ENCODE measurements at regions of chr4 and their contacts with region 1.

Region 1: GRCh38 chr4:10554694-10555093 is 97.5 kb upstream of the ZNF518B start:
- DNase-seq: peak in 8 of 9 experiments; percentile 7 to 59 (median 32)
- ATAC-seq: peak; percentile 51
- H3K4me3 ChIP-seq: no peak overlapping the region
- H3K4me3 Mint-ChIP-seq: no peak overlapping the region
- H3K27ac ChIP-seq: no peak overlapping the region
- H3K27ac Mint-ChIP-seq: no peak overlapping the region
- H3K4me1 ChIP-seq: no peaks in the 10 kb centered on the region
- H3K4me1 Mint-ChIP-seq: peaks cover 2% of the 10 kb centered on the region
- H3K27me3 ChIP-seq: no peaks in the 10 kb centered on the region
- H3K27me3 Mint-ChIP-seq: peaks cover 14% of the 10 kb centered on the region
- CTCF ChIP-seq: peak; percentile 92

Region 2: DNA sequence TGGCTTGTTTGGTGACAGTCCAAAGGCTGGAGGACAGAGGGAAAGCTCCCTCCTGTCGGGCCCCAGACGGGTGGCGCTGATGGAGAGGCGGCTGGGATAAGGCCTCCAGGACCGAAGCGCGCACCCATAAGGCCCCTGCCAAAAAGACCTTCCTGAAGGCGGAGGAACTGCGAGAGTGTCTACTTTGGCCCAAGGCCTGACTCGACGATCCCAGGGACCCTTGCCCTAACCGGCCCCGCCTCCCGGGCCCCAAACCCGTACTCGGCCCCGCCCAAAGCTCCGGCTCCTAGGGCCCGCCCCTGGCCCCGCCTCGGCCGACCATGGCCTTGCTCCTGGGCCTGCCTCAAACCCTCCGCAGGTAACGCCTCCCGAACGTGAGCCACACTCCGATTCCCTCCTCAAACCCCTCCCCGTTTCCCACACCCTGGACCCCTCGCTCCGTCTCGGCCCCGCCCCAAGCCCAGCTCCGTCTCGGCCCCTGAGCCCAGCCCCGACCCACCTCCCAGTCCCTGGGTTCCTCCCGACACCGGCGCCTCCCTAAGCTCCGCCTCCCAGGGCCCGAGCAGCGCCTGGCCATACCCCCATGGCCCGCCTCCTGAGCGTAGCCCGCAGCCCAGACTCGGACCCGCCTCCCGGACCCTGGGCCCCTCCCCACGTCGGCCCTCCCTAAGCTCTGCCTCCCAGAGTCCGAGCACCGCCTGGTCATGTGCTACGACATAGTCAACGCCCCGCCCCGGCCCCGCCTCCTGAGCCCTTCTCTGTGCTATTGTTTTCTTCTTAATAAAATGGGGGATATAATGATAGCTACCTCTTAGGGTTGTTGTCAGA is 863.2 kb before region 1 on chr4:
- CTCF ChIA-PET with region 1: no interaction called
- POLR2A ChIA-PET with region 1: no interaction called
- intact Hi-C with region 1: loop called in 1 of 2 experiments (anchors 5 kb)
- DNase-seq: peak; percentile 79 to 96 (median 89)
- ATAC-seq: peak; percentile 99
- H3K4me3 ChIP-seq: peak overlapping the region; percentile 72 to 75
- H3K4me3 Mint-ChIP-seq: peak overlapping the region; percentile 88
- H3K27ac ChIP-seq: peak overlapping the region; percentile 55 to 76
- H3K27ac Mint-ChIP-seq: peak overlapping the region; percentile 76
- H3K4me1 ChIP-seq: peaks cover 8% of the 10 kb centered on the region
- H3K4me1 Mint-ChIP-seq: peaks cover 28% of the 10 kb centered on the region
- H3K27me3 ChIP-seq: no peaks in the 10 kb centered on the region
- H3K27me3 Mint-ChIP-seq: no peaks in the 10 kb centered on the region
- CTCF ChIP-seq: no peak

Region 3: GRCh38 chr4:9762823-9763475 is 791.7 kb before region 1 on chr4:
- CTCF ChIA-PET with region 1: no interaction called
- POLR2A ChIA-PET with region 1: no interaction called
- intact Hi-C with region 1: loop called in 1 of 2 experiments (anchors 5 kb)
- DNase-seq: peak in 4 of 9 experiments; percentile 12 to 54 (median 32)
- ATAC-seq: no peak
- H3K4me3 ChIP-seq: no peak overlapping the region
- H3K4me3 Mint-ChIP-seq: no peak overlapping the region
- H3K27ac ChIP-seq: no peak overlapping the region
- H3K27ac Mint-ChIP-seq: no peak overlapping the region
- H3K4me1 ChIP-seq: no peaks in the 10 kb centered on the region
- H3K4me1 Mint-ChIP-seq: no peaks in the 10 kb centered on the region
- H3K27me3 ChIP-seq: no peaks in the 10 kb centered on the region
- H3K27me3 Mint-ChIP-seq: peaks cover 8% of the 10 kb centered on the region
- CTCF ChIP-seq: no peak

Region 4: GRCh38 chr4:10157478-10158332 is 397.0 kb before region 1 on chr4:
- CTCF ChIA-PET with region 1: interaction called, 41 read pairs
- POLR2A ChIA-PET with region 1: no interaction called
- intact Hi-C with region 1: no loop called
- DNase-seq: peak in 7 of 9 experiments; percentile 14 to 65 (median 27)
- ATAC-seq: peak; percentile 48
- H3K4me3 ChIP-seq: no peak overlapping the region
- H3K4me3 Mint-ChIP-seq: no peak overlapping the region
- H3K27ac ChIP-seq: no peak overlapping the region
- H3K27ac Mint-ChIP-seq: peak overlapping the region; percentile 55
- H3K4me1 ChIP-seq: peaks cover 43% of the 10 kb centered on the region
- H3K4me1 Mint-ChIP-seq: peaks cover 43% of the 10 kb centered on the region
- H3K27me3 ChIP-seq: no peaks in the 10 kb centered on the region
- H3K27me3 Mint-ChIP-seq: no peaks in the 10 kb centered on the region
- CTCF ChIP-seq: peak; percentile 54

Region 5: DNA sequence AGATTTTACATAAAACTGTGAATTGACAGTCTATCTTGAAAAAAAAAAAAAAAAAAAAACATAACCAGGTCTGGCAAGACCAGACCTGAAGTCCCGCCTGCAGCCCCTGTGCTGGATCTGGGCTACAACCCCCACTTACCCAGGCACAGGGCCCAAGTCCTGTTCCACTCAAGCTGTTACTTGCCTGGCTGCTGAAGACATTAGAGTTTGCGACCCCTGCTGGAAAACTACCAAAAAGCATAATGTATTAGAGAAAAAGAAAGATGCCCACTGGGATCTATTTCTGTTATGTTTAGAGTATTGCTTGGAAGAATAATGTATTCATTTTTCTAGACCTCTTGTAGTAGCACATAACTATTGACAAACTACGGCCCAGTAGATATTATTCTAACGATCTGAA is 869.3 kb after region 1 on chr4:
- CTCF ChIA-PET with region 1: interaction called, 5 read pairs
- POLR2A ChIA-PET with region 1: no interaction called
- intact Hi-C with region 1: loop called (anchors 2 kb)
- DNase-seq: peak in 4 of 9 experiments; percentile 15 to 51 (median 36)
- ATAC-seq: no peak
- H3K4me3 ChIP-seq: no peak overlapping the region
- H3K4me3 Mint-ChIP-seq: no peak overlapping the region
- H3K27ac ChIP-seq: no peak overlapping the region
- H3K27ac Mint-ChIP-seq: no peak overlapping the region
- H3K4me1 ChIP-seq: peaks cover 9% of the 10 kb centered on the region
- H3K4me1 Mint-ChIP-seq: peaks cover 13% of the 10 kb centered on the region
- H3K27me3 ChIP-seq: peaks cover 7 to 13% of the 10 kb centered on the region in 2 experiments
- H3K27me3 Mint-ChIP-seq: peaks cover 15% of the 10 kb centered on the region
- CTCF ChIP-seq: peak; percentile 38

Region 6: DNA sequence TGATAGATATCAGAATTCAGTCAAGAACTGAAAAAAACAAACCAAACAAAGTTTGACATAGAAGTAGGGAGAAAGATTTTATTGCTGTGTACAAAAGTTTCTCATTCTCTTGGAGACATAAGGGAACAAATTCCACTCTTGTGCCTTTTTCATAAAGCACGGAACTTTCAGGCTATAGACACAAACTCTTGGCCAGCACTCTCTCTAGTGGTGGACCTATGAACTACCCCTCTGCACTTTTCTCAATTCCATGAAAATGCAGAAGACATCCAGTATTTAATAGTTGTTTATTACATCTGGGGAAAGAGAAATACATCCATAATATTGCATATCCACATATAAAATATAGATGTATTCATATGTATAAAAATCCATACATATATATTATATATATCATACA is 1165.6 kb after region 1 on chr4:
- CTCF ChIA-PET with region 1: no interaction called
- POLR2A ChIA-PET with region 1: no interaction called
- intact Hi-C with region 1: loop called in 1 of 2 experiments (anchors 10 kb)
- DNase-seq: peak in 1 of 9 experiments; percentile 7
- ATAC-seq: no peak
- H3K4me3 ChIP-seq: no peak overlapping the region
- H3K4me3 Mint-ChIP-seq: no peak overlapping the region
- H3K27ac ChIP-seq: no peak overlapping the region
- H3K27ac Mint-ChIP-seq: no peak overlapping the region
- H3K4me1 ChIP-seq: no peaks in the 10 kb centered on the region
- H3K4me1 Mint-ChIP-seq: no peaks in the 10 kb centered on the region
- H3K27me3 ChIP-seq: no peaks in the 10 kb centered on the region
- H3K27me3 Mint-ChIP-seq: peaks cover 19% of the 10 kb centered on the region
- CTCF ChIP-seq: no peak